Tibial artery (tissue), 4 donors: ENCODE measurements at regions of chr14 and their contacts with region 1.

Region 1: DNA sequence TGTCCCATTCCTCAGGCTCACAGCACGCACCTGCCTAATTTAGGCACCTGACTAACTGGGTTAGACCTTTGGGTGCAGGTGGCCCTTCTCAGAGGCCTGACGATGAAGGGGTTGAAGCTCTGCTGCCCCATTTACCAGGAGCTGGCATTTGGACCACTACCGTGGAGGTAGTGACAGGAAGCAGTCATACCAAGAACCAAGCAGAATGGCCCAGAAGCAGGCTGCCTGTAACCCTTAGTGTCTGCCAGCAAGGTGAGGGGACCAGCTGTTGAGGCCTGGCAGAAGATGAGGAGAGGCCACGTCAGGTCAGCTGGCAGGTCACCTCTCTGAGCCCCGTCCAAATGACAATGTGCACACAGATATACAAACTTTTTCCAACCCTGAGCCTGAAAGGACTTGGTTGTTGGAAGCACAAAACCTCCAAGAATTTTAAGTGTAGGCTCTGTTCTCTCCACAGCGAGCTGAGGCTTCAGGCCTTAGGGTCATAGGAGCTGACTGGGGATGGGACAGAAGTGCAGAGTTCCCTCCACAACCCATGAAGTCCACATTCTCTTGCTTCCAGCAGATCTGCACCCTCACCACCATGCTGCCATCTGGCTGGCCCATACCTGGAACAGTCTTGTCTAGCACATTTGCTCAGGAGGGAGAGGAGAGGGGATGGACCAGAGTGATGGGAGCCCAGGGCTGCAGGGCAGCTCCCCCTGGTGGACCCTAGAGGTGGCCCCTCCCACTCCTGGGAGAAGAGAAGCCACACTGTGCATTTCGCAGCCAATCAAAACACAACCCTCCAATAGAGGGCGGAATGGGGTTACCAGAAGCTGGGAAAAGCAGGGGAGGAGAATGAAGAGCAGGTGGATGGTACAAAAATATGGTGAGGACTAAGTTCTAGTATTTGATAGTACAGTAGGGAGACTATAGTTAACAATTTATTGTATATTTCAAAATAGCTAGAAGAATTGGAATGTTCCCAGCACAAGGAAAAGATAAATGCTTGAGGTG is 23.3 kb downstream of the VASH1 start:
- DNase-seq: peak; percentile 88 to 93
- H3K4me3 ChIP-seq: no peak overlapping the region
- H3K27ac ChIP-seq: peak overlapping the region; percentile 52 to 72
- H3K4me1 ChIP-seq: peaks cover 0 to 57% (median 36%) of the 10 kb centered on the region in 4 donors
- H3K27me3 ChIP-seq: no peaks in the 10 kb centered on the region
- CTCF ChIP-seq: peak; percentile 92 to 93

Region 2: DNA sequence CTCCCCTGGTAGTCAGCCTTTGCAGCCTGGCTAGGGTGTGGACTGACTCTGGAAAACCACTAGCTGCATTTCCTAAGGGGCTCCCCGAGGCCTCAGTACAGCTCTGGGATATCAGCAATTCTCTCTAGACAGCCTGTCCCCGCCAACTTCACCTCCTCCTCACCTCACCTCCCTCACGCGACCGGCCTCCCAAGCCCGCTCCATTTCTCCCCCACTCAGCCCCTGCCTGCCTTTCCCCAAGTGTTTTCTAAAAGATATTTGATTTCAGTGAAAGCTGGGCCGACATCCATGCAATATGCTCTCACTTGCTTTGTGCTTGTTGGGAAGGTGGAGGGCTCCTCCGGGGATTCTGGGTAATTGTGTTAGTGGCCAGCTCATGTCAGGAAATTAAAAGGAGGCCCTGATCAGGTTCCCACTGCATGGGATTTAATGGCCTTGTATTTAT is 316.8 kb before region 1 on chr14:
- intact Hi-C with region 1: no loop called
- DNase-seq: no peak
- H3K4me3 ChIP-seq: no peak overlapping the region
- H3K27ac ChIP-seq: no peak overlapping the region
- H3K4me1 ChIP-seq: no peaks in the 10 kb centered on the region
- H3K27me3 ChIP-seq: no peaks in the 10 kb centered on the region
- CTCF ChIP-seq: no peak

Region 3: GRCh38 chr14:76710056-76711010 is 74.2 kb before region 1 on chr14:
- intact Hi-C with region 1: loop called (anchors 2 kb)
- DNase-seq: no peak
- H3K4me3 ChIP-seq: no peak overlapping the region
- H3K27ac ChIP-seq: no peak overlapping the region
- H3K4me1 ChIP-seq: no peaks in the 10 kb centered on the region
- H3K27me3 ChIP-seq: no peaks in the 10 kb centered on the region
- CTCF ChIP-seq: peak; percentile 69 to 86

Region 4: GRCh38 chr14:76726551-76726970 is 58.0 kb before region 1 on chr14:
- intact Hi-C with region 1: no loop called
- DNase-seq: no peak
- H3K4me3 ChIP-seq: no peak overlapping the region
- H3K27ac ChIP-seq: no peak overlapping the region
- H3K4me1 ChIP-seq: no peaks in the 10 kb centered on the region
- H3K27me3 ChIP-seq: no peaks in the 10 kb centered on the region
- CTCF ChIP-seq: no peak

Region 5: DNA sequence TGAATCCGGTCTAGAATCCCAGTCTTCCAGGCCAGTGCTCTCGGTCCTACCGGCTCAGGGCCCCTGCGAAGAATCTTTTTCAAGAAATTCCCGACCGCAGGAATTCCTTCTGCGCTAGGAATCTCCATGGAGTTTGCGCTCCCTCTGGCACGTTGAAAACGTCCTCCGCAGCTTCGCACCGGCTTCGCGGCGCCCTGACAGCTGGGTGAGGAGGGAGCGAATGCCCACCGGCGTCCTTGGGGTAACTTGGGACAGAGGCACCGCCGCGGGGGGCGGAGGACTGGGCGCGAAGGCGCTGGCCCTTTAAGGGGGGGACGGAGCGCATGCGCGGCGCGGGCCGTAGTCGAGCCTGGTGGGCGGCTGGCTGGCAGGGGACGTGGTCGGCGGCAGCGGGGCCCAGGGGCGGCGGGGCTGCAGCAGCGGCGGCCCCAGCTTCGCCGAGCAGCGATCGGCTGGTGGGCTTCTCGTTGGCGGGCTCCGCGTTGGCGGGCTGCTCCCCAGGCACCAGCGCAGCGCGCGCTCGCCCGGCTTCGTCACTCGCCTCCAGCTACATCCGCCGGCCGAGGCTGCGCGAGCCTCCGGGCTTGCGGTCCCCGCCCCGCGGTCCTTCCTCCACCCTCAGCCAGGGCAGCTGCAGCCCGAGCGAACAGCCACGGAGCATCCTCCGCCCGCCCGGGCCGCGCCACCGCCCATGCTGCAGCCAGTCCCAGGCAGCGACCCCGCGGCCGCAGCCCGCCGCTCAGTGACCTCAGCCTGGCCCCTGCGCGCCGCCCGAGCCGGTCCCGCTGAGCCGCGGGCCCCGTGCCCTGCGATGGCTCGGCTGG is 23.2 kb before region 1 on chr14 and contains the start of gene VASH1:
- intact Hi-C with region 1: loop called (anchors 2 kb)
- DNase-seq: peak; percentile 65 to 82
- H3K4me3 ChIP-seq: peak within 1 kb of the TSS; percentile 75 to 99
- H3K27ac ChIP-seq: peak within 1 kb of the TSS; percentile 82 to 87
- H3K4me1 ChIP-seq: peaks cover 0 to 44% (median 25%) of the 10 kb centered on the region in 4 donors
- H3K27me3 ChIP-seq: no peaks in the 10 kb centered on the region
- CTCF ChIP-seq: no peak